Endothelial cell of umbilical vein (primary cell): ENCODE measurements at regions of chr2 and their contacts with region 1.

Region 1: GRCh38 chr2:182565906-182566567 is 139.2 kb upstream of the PDE1A start:
- DNase-seq: no peak
- H3K4me3 ChIP-seq: no peak overlapping the region
- H3K27ac ChIP-seq: no peak overlapping the region
- H3K4me1 ChIP-seq: no peaks in the 10 kb centered on the region
- H3K27me3 ChIP-seq: no peaks in the 10 kb centered on the region
- CTCF ChIP-seq: no peak
- POLR2A ChIP-seq: no peak

Region 2: DNA sequence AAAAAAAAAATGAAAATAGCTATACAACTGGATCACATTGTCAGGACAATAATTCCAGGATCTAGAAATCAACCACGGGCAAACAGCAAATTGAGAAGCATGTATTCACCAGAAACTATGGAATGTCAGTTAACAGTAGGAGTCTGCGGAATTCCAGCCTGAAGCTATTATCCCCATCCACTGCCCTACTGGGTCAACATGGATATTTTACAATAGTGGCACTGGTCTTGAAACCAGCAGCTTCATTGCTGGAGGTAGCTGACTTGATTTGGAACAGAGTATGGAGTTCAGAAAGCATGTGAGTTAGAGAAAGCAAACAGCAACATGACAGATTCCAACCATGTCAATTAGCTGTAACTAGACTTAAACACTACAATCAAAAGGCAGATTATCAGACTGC is 83.5 kb before region 1 on chr2:
- CTCF ChIA-PET with region 1: no interaction called
- POLR2A ChIA-PET with region 1: no interaction called
- dilution Hi-C with region 1: no loop called
- intact Hi-C with region 1: loop called (anchors 1 kb)
- DNase-seq: no peak
- H3K4me3 ChIP-seq: no peak overlapping the region
- H3K27ac ChIP-seq: no peak overlapping the region
- H3K4me1 ChIP-seq: no peaks in the 10 kb centered on the region
- H3K27me3 ChIP-seq: no peaks in the 10 kb centered on the region
- CTCF ChIP-seq: no peak
- POLR2A ChIP-seq: no peak

Region 3: GRCh38 chr2:182606728-182607681 is 41.0 kb after region 1 on chr2:
- CTCF ChIA-PET with region 1: no interaction called
- POLR2A ChIA-PET with region 1: no interaction called
- dilution Hi-C with region 1: no loop called
- intact Hi-C with region 1: no loop called
- DNase-seq: no peak
- H3K4me3 ChIP-seq: no peak overlapping the region
- H3K27ac ChIP-seq: no peak overlapping the region
- H3K4me1 ChIP-seq: no peaks in the 10 kb centered on the region
- H3K27me3 ChIP-seq: no peaks in the 10 kb centered on the region
- CTCF ChIP-seq: no peak
- POLR2A ChIP-seq: no peak